B cell (primary cell): ENCODE measurements at regions of chr5 and their contacts with region 1.

Region 1: GRCh38 chr5:78162253-78162862 is 132.1 kb downstream of the AP3B1 start:
- DNase-seq: peak; percentile 61
- ATAC-seq: no peak
- H3K4me3 ChIP-seq: no peak overlapping the region
- H3K4me3 Mint-ChIP-seq: no peak overlapping the region
- H3K27ac ChIP-seq: no peak overlapping the region
- H3K27ac Mint-ChIP-seq: no peak overlapping the region
- H3K4me1 ChIP-seq: no peaks in the 10 kb centered on the region
- H3K4me1 Mint-ChIP-seq: peaks cover 3% of the 10 kb centered on the region
- H3K27me3 ChIP-seq: no peaks in the 10 kb centered on the region
- H3K27me3 Mint-ChIP-seq: no peaks in the 10 kb centered on the region
- CTCF ChIP-seq: peak; percentile 86

Region 2: DNA sequence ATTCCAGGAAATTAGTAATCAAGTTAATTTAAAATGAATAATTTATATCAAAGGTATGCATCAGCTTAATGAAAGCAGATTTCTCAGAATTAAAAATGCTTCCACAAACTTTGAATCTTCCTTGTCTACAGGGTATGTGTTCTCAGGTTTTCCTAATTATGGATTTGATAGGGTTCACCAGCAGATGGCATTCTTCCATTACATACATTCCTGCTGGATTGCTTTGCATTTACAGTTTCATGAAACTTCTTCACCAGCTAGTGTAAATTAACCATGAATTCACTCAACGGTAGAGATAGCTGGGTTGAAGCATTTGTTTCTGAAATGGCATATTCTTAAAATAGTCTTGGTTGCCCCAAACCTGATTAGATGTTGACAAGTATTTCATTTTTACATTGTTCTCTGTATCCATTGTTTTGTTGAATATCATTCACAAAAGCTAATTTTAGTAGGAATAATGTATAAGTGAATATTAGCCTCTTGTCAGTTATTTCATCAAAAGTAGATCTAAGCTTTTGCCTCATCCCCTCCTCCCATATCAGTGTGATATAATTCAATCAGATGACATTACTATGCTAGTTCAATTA is 601.6 kb before region 1 on chr5:
- CTCF ChIA-PET with region 1: no interaction called
- POLR2A ChIA-PET with region 1: no interaction called
- intact Hi-C with region 1: loop called (anchors 1 kb)
- DNase-seq: peak; percentile 8
- ATAC-seq: no peak
- H3K4me3 ChIP-seq: no peak overlapping the region
- H3K4me3 Mint-ChIP-seq: no peak overlapping the region
- H3K27ac ChIP-seq: no peak overlapping the region
- H3K27ac Mint-ChIP-seq: no peak overlapping the region
- H3K4me1 ChIP-seq: no peaks in the 10 kb centered on the region
- H3K4me1 Mint-ChIP-seq: no peaks in the 10 kb centered on the region
- H3K27me3 ChIP-seq: no peaks in the 10 kb centered on the region
- H3K27me3 Mint-ChIP-seq: peaks cover 1% of the 10 kb centered on the region
- CTCF ChIP-seq: no peak

Region 3: DNA sequence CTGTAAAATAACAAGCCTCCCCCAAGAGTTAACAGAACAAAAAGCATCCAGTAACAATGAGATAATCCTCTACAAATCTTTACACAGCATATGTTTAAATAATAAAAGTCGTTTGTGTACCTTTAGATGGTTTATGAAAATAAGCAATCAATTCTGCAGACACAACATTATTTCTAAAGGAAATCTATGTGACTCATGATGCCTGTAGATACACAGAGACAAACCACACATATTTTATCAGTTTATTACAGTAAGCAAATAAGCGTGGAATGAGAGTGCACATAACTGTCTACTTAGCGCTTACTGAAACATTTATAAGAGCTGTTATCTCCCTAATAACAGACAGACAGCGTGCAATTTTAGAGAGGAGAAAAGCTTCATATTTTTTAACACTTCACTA is 111.5 kb before region 1 on chr5:
- CTCF ChIA-PET with region 1: no interaction called
- POLR2A ChIA-PET with region 1: no interaction called
- intact Hi-C with region 1: no loop called
- DNase-seq: no peak
- ATAC-seq: no peak
- H3K4me3 ChIP-seq: no peak overlapping the region
- H3K4me3 Mint-ChIP-seq: no peak overlapping the region
- H3K27ac ChIP-seq: no peak overlapping the region
- H3K27ac Mint-ChIP-seq: no peak overlapping the region
- H3K4me1 ChIP-seq: no peaks in the 10 kb centered on the region
- H3K4me1 Mint-ChIP-seq: no peaks in the 10 kb centered on the region
- H3K27me3 ChIP-seq: no peaks in the 10 kb centered on the region
- H3K27me3 Mint-ChIP-seq: no peaks in the 10 kb centered on the region
- CTCF ChIP-seq: no peak

Region 4: DNA sequence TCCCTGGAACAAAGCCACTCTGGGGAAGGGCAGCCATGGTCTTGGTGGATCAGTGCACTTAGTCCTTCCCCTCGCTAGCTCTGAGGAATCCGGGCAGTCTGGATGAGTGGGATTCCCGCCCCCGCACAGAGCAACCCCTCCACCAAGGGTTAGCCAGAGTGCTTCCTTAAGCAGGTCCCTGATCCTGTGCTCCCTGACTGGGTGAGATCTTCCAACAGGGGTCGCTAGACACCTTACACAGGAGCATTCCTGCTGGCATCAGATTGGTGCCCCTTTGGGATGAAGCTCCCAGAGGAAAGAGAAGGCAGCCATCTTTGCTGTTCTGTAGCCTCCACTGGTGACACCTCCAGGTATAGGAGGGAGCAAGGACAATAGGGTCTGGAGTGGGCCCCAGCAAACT is 96.7 kb before region 1 on chr5:
- CTCF ChIA-PET with region 1: interaction called, 4 read pairs
- POLR2A ChIA-PET with region 1: no interaction called
- intact Hi-C with region 1: loop called (anchors 10 kb)
- DNase-seq: peak; percentile 9
- ATAC-seq: no peak
- H3K4me3 ChIP-seq: no peak overlapping the region
- H3K4me3 Mint-ChIP-seq: no peak overlapping the region
- H3K27ac ChIP-seq: no peak overlapping the region
- H3K27ac Mint-ChIP-seq: no peak overlapping the region
- H3K4me1 ChIP-seq: no peaks in the 10 kb centered on the region
- H3K4me1 Mint-ChIP-seq: peaks cover 11% of the 10 kb centered on the region
- H3K27me3 ChIP-seq: no peaks in the 10 kb centered on the region
- H3K27me3 Mint-ChIP-seq: no peaks in the 10 kb centered on the region
- CTCF ChIP-seq: no peak

Region 5: DNA sequence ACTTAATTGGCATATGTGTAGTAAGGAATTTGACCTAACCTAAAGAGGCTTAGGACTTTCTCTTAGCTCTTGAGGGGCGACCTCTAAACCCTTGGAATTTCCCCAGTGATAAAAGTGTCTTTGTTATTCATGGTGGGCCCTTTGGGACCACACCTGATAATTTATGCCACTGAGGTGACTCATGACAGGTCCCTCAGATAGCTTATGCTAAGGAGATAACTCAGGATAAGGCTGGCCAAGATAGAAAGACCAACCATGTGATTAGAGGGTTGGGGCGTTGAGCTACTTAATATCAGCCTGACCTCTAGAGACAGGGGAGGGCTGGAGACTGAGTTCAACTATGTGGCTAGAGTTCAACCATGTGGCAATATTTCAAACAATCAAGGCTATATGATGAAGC is 86.0 kb before region 1 on chr5:
- CTCF ChIA-PET with region 1: no interaction called
- POLR2A ChIA-PET with region 1: no interaction called
- intact Hi-C with region 1: no loop called
- DNase-seq: no peak
- ATAC-seq: no peak
- H3K4me3 ChIP-seq: no peak overlapping the region
- H3K4me3 Mint-ChIP-seq: no peak overlapping the region
- H3K27ac ChIP-seq: no peak overlapping the region
- H3K27ac Mint-ChIP-seq: no peak overlapping the region
- H3K4me1 ChIP-seq: no peaks in the 10 kb centered on the region
- H3K4me1 Mint-ChIP-seq: peaks cover 7% of the 10 kb centered on the region
- H3K27me3 ChIP-seq: no peaks in the 10 kb centered on the region
- H3K27me3 Mint-ChIP-seq: no peaks in the 10 kb centered on the region
- CTCF ChIP-seq: no peak

Region 6: DNA sequence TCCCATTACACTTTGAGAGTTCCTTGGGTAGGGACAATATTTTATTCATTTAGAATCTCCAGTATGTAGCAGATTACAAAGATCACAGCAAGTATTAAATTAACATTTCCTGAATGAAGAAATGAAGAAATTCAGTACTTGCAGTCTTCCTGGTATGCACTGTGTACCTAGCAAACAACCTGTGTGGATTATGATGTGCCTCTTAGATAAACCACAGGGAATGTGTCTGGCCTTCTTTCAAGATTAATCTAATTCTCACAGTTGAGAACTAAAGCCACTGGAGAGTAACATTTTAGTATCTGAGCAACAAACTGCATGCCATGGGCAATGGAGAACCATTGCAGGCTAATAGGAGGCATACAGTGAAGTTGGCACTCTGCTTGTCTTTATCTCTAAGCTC is 67.2 kb before region 1 on chr5:
- CTCF ChIA-PET with region 1: no interaction called
- POLR2A ChIA-PET with region 1: no interaction called
- intact Hi-C with region 1: no loop called
- DNase-seq: no peak
- ATAC-seq: no peak
- H3K4me3 ChIP-seq: no peak overlapping the region
- H3K4me3 Mint-ChIP-seq: no peak overlapping the region
- H3K27ac ChIP-seq: no peak overlapping the region
- H3K27ac Mint-ChIP-seq: no peak overlapping the region
- H3K4me1 ChIP-seq: no peaks in the 10 kb centered on the region
- H3K4me1 Mint-ChIP-seq: peaks cover 3% of the 10 kb centered on the region
- H3K27me3 ChIP-seq: no peaks in the 10 kb centered on the region
- H3K27me3 Mint-ChIP-seq: no peaks in the 10 kb centered on the region
- CTCF ChIP-seq: no peak

Region 7: GRCh38 chr5:78109891-78110324 is 52.5 kb before region 1 on chr5:
- CTCF ChIA-PET with region 1: no interaction called
- POLR2A ChIA-PET with region 1: no interaction called
- intact Hi-C with region 1: loop called (anchors 5 kb)
- DNase-seq: peak; percentile 80
- ATAC-seq: peak; percentile 71
- H3K4me3 ChIP-seq: peak overlapping the region in 4 of 5 experiments; percentile 4 to 51 (median 30)
- H3K4me3 Mint-ChIP-seq: peak overlapping the region; percentile 64
- H3K27ac ChIP-seq: peak overlapping the region; percentile 69 to 83
- H3K27ac Mint-ChIP-seq: peak overlapping the region; percentile 73
- H3K4me1 ChIP-seq: peaks cover 56 to 67% of the 10 kb centered on the region in 2 donors
- H3K4me1 Mint-ChIP-seq: peaks cover 58% of the 10 kb centered on the region
- H3K27me3 ChIP-seq: no peaks in the 10 kb centered on the region
- H3K27me3 Mint-ChIP-seq: no peaks in the 10 kb centered on the region
- CTCF ChIP-seq: no peak

Region 8: DNA sequence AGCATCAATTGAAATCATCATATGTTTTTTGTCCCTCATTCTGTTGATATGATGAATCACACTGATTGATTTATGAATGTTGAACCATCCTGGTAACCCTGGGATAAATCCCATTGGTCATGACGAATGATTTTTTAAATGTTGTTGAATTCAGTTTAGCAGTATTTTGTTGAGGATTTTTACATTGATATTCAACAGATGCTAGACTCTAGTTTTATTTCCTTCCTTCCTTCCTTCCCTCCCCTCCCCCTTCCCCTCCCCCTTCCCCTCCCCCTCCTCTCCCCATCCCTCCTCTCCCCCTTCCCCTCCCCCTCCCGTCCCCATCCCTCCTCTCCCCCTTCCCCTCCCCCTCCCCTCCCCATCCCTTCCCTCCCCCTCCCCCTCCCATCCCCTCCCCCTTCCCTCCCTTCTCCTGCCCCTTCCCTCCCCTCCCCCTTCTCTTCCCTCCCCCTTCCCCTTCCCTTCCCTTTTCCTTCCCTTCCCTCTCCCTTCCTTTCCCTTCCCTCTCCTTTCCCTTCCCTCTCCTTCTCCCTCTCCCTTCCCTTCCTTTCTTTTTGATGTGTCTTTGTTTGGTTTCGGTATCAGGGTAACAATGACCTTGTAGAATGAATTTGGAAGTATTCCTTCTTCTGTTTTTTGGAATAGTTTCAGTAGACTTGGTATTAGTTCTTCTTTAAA is 10.6 kb before region 1 on chr5:
- CTCF ChIA-PET with region 1: interaction called, 12 read pairs
- POLR2A ChIA-PET with region 1: no interaction called
- intact Hi-C with region 1: no loop called
- DNase-seq: no peak
- ATAC-seq: no peak
- H3K4me3 ChIP-seq: no peak overlapping the region
- H3K4me3 Mint-ChIP-seq: no peak overlapping the region
- H3K27ac ChIP-seq: no peak overlapping the region
- H3K27ac Mint-ChIP-seq: no peak overlapping the region
- H3K4me1 ChIP-seq: no peaks in the 10 kb centered on the region
- H3K4me1 Mint-ChIP-seq: peaks cover 2% of the 10 kb centered on the region
- H3K27me3 ChIP-seq: no peaks in the 10 kb centered on the region
- H3K27me3 Mint-ChIP-seq: no peaks in the 10 kb centered on the region
- CTCF ChIP-seq: no peak

Region 9: GRCh38 chr5:78447775-78448424 is 285.5 kb after region 1 on chr5:
- CTCF ChIA-PET with region 1: no interaction called
- POLR2A ChIA-PET with region 1: no interaction called
- intact Hi-C with region 1: no loop called
- DNase-seq: no peak
- ATAC-seq: no peak
- H3K4me3 ChIP-seq: no peak overlapping the region
- H3K4me3 Mint-ChIP-seq: no peak overlapping the region
- H3K27ac ChIP-seq: no peak overlapping the region
- H3K27ac Mint-ChIP-seq: no peak overlapping the region
- H3K4me1 ChIP-seq: no peaks in the 10 kb centered on the region
- H3K4me1 Mint-ChIP-seq: no peaks in the 10 kb centered on the region
- H3K27me3 ChIP-seq: no peaks in the 10 kb centered on the region
- H3K27me3 Mint-ChIP-seq: no peaks in the 10 kb centered on the region
- CTCF ChIP-seq: no peak